ENCODE measurements at regions of chr1 and their contacts with region 1.

Region 1: GRCh38 chr1:228471762-228472398 is 15.3 kb upstream of the RNF187 start:
- DNase-seq: peak; percentile 62
- ATAC-seq: peak; percentile 87
- H3K4me3 Mint-ChIP-seq: no peak overlapping the region
- H3K27ac Mint-ChIP-seq: peak overlapping the region; percentile 86
- H3K4me1 Mint-ChIP-seq: peaks cover 54% of the 10 kb centered on the region
- H3K27me3 Mint-ChIP-seq: peaks cover 4% of the 10 kb centered on the region

Region 2: GRCh38 chr1:228457396-228458176 is 14.3 kb before region 1 on chr1:
- CTCF ChIA-PET with region 1: interaction called, 69 read pairs
- DNase-seq: peak; percentile 95
- ATAC-seq: peak; percentile 83
- H3K4me3 Mint-ChIP-seq: peak overlapping the region; percentile 96
- H3K27ac Mint-ChIP-seq: peak overlapping the region; percentile 99
- H3K4me1 Mint-ChIP-seq: peaks cover 56% of the 10 kb centered on the region
- H3K27me3 Mint-ChIP-seq: no peaks in the 10 kb centered on the region

Region 3: DNA sequence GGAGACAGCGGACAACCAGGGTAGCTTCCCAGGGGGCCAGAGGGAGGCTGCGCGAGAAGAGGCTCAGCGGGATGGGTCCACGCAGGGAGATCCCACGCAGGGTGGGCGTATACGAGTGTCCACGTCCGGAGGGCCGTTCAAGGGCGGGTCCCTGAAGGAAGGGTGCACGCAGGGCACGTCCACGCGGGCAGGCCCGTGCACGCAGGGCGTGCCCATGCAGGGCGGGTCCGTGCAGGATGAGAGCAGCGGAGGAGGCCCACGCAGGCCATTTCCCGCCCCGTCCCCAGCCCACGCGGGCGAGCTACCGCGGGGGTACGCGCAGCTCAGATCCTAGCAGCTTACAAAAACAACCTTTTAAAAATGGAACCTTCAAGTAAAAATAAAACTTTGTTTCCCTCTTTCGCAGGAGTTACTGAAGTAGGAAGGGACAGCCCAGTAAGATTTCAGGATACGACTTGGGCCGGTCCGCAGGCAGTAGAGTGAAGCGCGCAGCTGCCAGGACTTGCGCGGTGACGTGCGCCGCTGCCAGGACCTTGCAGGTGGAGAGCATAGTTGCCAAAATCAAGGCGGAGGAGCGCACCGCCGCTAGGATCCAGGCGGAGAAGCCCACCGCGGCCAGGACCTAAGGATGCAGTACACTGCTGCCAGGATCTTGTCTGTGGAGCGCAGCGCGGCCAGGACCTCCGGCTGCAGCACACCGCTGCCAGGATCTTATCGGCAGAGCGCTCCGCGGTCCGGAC is 14.9 kb after region 1 on chr1:
- CTCF ChIA-PET with region 1: interaction called, 49 read pairs
- DNase-seq: peak; percentile 89
- ATAC-seq: peak; percentile 70
- H3K4me3 Mint-ChIP-seq: peak overlapping the region; percentile 97
- H3K27ac Mint-ChIP-seq: peak overlapping the region; percentile 98
- H3K4me1 Mint-ChIP-seq: peaks cover 64% of the 10 kb centered on the region
- H3K27me3 Mint-ChIP-seq: no peaks in the 10 kb centered on the region

Region 4: DNA sequence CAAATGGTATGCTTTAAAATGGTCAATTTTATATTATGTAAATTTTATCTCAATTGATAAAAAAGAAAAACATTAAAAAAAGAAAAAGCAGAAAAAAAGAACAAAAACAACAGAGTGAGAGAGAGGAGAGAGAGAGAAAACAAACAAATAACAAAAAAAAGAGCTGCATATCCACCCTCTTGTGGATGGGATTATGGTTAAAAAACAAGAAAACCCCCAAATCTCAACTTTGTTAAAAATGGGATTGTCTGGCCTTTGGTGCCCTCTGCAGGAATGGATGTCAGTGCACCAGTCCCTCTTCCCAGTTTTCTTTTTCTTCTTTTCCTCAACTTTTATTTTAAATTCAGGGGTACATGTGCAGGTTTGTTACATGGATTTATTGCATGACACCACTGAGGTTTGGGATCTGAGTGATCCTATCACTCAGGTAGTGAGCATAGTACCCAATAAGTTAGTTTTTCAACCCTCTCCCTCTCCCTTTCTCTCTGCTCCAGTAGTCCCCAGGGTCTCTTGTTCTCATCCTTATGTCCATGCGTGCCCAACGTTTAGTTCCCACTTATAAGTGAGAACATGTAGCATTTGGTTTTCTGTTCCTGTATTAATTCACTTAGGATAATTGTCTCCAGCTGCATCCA is 43.4 kb after region 1 on chr1:
- CTCF ChIA-PET with region 1: interaction called, 17 read pairs
- DNase-seq: peak; percentile 53
- ATAC-seq: peak; percentile 51
- H3K4me3 Mint-ChIP-seq: no peak overlapping the region
- H3K27ac Mint-ChIP-seq: no peak overlapping the region
- H3K4me1 Mint-ChIP-seq: peaks cover 22% of the 10 kb centered on the region
- H3K27me3 Mint-ChIP-seq: peaks cover 57% of the 10 kb centered on the region